CD4-positive, alpha-beta memory T cell (primary cell): ENCODE measurements at regions of chr3 and their contacts with region 1.

Region 1: DNA sequence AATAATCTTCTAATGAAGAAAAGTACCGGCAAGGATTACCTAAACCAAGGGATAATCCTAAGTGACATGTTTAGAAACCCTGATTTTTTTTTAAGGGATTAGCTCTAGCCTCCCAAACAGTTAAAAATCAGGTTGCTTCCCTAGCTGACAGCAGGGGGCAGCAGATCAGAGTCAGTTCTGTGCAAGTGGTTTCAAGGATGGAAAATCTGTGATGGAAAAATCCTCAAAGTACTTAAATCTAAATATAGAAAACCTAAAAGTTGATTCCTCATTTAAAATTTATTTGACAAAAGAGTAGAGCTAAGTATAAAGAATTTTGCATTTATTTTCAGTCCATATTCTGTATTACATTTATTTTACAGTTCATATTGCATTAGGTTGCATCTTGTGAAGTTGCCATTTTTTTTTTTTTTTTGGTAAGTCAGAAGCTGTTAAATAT is 107.6 kb downstream of the PEX5L start:
- DNase-seq: peak in 4 of 5 donors; percentile 14 to 32 (median 20)
- H3K4me3 ChIP-seq: no peak overlapping the region
- H3K4me3 Mint-ChIP-seq: no peak overlapping the region
- H3K27ac ChIP-seq: no peak overlapping the region
- H3K27ac Mint-ChIP-seq: no peak overlapping the region
- H3K4me1 ChIP-seq: no peaks in the 10 kb centered on the region
- H3K4me1 Mint-ChIP-seq: peaks cover 0 to 1% (median 0%) of the 10 kb centered on the region in 4 donors
- H3K27me3 ChIP-seq: no peaks in the 10 kb centered on the region
- H3K27me3 Mint-ChIP-seq: peaks cover 3 to 14% of the 10 kb centered on the region in 2 donors

Region 2: GRCh38 chr3:179942553-179943075 is 13.5 kb after region 1 on chr3:
- CTCF ChIA-PET with region 1: interaction called, 15 read pairs
- POLR2A ChIA-PET with region 1: no interaction called
- intact Hi-C with region 1: no loop called
- DNase-seq: no peak
- H3K4me3 ChIP-seq: no peak overlapping the region
- H3K4me3 Mint-ChIP-seq: peak overlapping the region in 1 of 8 donors; percentile 51
- H3K27ac ChIP-seq: no peak overlapping the region
- H3K27ac Mint-ChIP-seq: no peak overlapping the region
- H3K4me1 ChIP-seq: no peaks in the 10 kb centered on the region
- H3K4me1 Mint-ChIP-seq: peaks cover 0 to 2% (median 0%) of the 10 kb centered on the region in 4 donors
- H3K27me3 ChIP-seq: no peaks in the 10 kb centered on the region
- H3K27me3 Mint-ChIP-seq: peaks cover 8 to 14% of the 10 kb centered on the region in 2 donors

Region 3: GRCh38 chr3:180163719-180164118 is 234.6 kb after region 1 on chr3:
- CTCF ChIA-PET with region 1: no interaction called
- POLR2A ChIA-PET with region 1: no interaction called
- intact Hi-C with region 1: no loop called
- DNase-seq: no peak
- H3K4me3 ChIP-seq: no peak overlapping the region
- H3K4me3 Mint-ChIP-seq: no peak overlapping the region
- H3K27ac ChIP-seq: no peak overlapping the region
- H3K27ac Mint-ChIP-seq: no peak overlapping the region
- H3K4me1 ChIP-seq: no peaks in the 10 kb centered on the region
- H3K4me1 Mint-ChIP-seq: no peaks in the 10 kb centered on the region
- H3K27me3 ChIP-seq: no peaks in the 10 kb centered on the region
- H3K27me3 Mint-ChIP-seq: no peaks in the 10 kb centered on the region

Region 4: GRCh38 chr3:181278468-181279238 is 1349.5 kb after region 1 on chr3:
- CTCF ChIA-PET with region 1: interaction called, 14 read pairs
- POLR2A ChIA-PET with region 1: no interaction called
- intact Hi-C with region 1: no loop called
- DNase-seq: peak in 1 of 5 donors; percentile 2
- H3K4me3 ChIP-seq: no peak overlapping the region
- H3K4me3 Mint-ChIP-seq: no peak overlapping the region
- H3K27ac ChIP-seq: no peak overlapping the region
- H3K27ac Mint-ChIP-seq: no peak overlapping the region
- H3K4me1 ChIP-seq: no peaks in the 10 kb centered on the region
- H3K4me1 Mint-ChIP-seq: peaks cover 0 to 3% (median 0%) of the 10 kb centered on the region in 4 donors
- H3K27me3 ChIP-seq: no peaks in the 10 kb centered on the region
- H3K27me3 Mint-ChIP-seq: peaks cover 0 to 1% of the 10 kb centered on the region in 2 donors